ENCODE measurements at regions of chr7 and their contacts with region 1.

Region 1: DNA sequence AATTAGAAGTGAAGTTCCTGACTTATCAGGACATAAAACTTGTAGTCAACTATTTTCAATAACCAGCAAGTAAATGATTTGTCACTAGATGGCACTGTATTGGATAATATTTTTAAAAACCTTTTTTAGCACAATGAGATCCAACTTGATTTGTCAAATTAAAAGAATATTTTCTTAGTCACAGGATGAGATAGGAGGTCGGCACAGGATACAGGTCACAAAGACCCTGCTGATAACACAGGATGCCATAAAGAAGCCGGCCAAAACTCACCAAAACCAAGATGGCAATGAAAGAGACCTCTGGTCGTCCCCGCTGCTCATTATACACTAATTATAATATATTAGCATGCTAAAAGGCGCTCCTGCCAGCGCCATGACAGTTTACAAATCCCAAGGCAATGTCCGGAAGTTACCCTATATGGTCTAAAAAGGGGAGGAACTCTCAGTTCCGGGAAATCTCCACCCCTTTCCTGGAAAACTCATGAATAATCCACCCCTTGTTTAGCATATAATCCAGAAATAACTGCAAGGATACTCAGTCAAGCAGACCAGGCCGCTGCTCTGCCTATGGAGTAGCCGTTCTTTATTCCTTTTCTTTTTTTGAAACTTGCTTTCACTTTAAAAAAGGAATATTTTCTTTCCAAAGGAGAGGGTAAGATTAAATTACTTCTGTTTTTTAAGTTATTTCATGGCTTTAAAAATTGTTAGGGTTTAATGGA is 255.7 kb upstream of the MKLN1 start:
- DNase-seq: no peak
- ATAC-seq: peak; percentile 65

Region 2: GRCh38 chr7:131424219-131424822 is 352.4 kb after region 1 on chr7:
- intact Hi-C with region 1: loop called in 1 of 2 experiments (anchors 10 kb)
- DNase-seq: no peak
- ATAC-seq: peak; percentile 73